Heart right ventricle (tissue), 16 donors: ENCODE measurements at regions of chr9 and their contacts with region 1.

Region 1: DNA sequence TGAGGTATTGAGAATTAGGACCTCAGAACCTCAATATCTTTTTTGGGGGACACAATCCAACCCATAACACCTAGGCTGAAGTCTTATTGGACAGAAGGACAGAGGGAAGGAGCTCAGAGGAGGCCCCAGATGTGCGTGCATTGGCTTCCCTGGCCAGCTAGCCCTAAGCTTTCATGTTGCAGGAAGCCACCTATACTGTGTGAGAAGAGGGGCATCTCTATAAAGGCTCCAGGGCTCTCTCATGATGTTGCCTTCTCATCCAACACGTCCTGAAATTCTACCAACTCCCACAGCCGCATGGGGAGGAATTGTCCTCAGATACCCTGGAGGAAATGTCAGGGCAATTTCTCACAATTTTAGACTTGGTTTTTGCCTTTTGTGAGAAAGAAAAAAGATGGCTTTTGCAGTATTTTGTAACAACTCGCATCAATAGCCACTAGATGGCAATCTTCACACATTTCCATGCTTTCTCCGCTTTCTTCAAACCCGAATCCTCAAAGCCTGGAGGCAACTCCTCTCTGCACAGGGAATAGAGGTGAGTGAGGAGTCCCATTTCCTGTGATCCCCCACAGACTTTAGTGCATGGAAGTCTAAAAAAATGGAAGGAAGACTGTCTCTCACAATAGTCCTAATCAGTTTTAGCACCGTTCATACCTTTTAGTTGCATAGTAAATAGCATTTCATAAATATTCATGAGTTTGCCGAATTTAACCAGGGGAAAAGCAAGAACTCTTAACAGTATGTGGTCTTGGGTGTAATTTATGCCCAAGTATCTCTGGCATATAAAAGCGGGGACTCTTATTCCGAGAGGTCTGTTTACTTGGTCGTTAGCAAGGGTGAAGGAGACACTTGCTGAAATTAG is 7.4 kb upstream of the PPP3R2 start:
- DNase-seq: peak in 1 of 2 donors; percentile 16
- ATAC-seq: peak in 4 of 8 donors; percentile 7 to 61 (median 48)
- H3K4me3 ChIP-seq: no peak overlapping the region
- H3K27ac ChIP-seq: no peak overlapping the region
- H3K4me1 ChIP-seq: peaks cover 0 to 6% (median 0%) of the 10 kb centered on the region in 9 donors
- H3K27me3 ChIP-seq: peaks cover 0 to 34% (median 10%) of the 10 kb centered on the region in 7 donors
- CTCF ChIP-seq: peak; percentile 40 to 72 (median 65)

Region 2: GRCh38 chr9:101711330-101711941 is 109.3 kb after region 1 on chr9:
- intact Hi-C with region 1: loop called in 1 of 10 experiments (anchors 10 kb)
- DNase-seq: no peak
- ATAC-seq: no peak
- H3K4me3 ChIP-seq: no peak overlapping the region
- H3K27ac ChIP-seq: no peak overlapping the region
- H3K4me1 ChIP-seq: peaks cover 0 to 2% (median 0%) of the 10 kb centered on the region in 9 donors
- H3K27me3 ChIP-seq: peaks cover 0 to 9% (median 3%) of the 10 kb centered on the region in 7 donors
- CTCF ChIP-seq: peak in 8 of 9 donors; percentile 5 to 62 (median 42)

Region 3: GRCh38 chr9:101727612-101728524 is 125.7 kb after region 1 on chr9:
- intact Hi-C with region 1: loop called in 3 of 10 experiments (anchors 5 kb)
- DNase-seq: no peak
- ATAC-seq: no peak
- H3K4me3 ChIP-seq: no peak overlapping the region
- H3K27ac ChIP-seq: no peak overlapping the region
- H3K4me1 ChIP-seq: no peaks in the 10 kb centered on the region
- H3K27me3 ChIP-seq: peaks cover 0 to 9% (median 0%) of the 10 kb centered on the region in 7 donors
- CTCF ChIP-seq: peak; percentile 18 to 49 (median 46)

Region 4: DNA sequence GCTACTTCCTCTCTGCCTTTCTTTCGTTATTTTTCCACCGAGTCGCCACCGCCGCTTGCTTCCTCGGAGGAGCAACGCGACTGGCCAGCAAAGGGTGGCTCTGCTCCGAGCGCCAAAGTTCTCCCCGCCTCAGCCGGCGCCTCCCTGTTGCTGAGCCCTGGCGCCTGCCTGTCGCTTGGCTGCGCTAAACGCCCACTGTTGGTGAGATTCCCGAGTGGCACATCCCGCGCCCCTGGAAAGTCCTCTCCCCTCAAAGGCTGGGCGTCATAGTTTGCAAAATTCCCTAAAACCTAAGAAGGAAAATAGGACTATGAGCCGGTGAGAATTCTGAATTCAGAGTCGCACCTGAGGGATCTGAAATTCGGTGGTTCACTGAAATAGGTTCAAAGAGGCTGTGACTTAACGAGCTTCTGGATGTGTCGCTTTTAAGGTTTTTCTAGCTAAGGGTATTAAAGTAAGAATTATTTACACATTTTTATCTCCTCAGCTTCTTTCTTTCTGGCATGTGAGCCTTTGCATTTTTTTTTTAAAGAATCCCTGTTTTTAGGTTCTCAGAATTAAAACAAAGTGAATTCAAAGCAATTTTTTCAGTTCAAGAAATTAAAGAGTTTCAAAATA is 136.5 kb after region 1 on chr9 and contains the start of gene GRIN3A:
- intact Hi-C with region 1: loop called in 2 of 10 experiments (anchors 5 kb)
- DNase-seq: peak; percentile 19 to 42
- ATAC-seq: peak; percentile 65 to 91 (median 82)
- H3K4me3 ChIP-seq: peak within 1 kb of the TSS; percentile 39 to 59 (median 50)
- H3K27ac ChIP-seq: peak within 1 kb of the TSS in 2 of 10 donors; percentile 9 to 56
- H3K4me1 ChIP-seq: peaks cover 0 to 19% (median 10%) of the 10 kb centered on the region in 9 donors
- H3K27me3 ChIP-seq: peaks cover 9 to 79% (median 66%) of the 10 kb centered on the region in 7 donors
- CTCF ChIP-seq: peak in 3 of 9 donors; percentile 13 to 44 (median 26)
- total RNA-seq, gene GRIN3A: 0.07 to 1.4 (median 0.38) TPM